ENCODE measurements at regions of chr1 and their contacts with region 1.

Region 1: DNA sequence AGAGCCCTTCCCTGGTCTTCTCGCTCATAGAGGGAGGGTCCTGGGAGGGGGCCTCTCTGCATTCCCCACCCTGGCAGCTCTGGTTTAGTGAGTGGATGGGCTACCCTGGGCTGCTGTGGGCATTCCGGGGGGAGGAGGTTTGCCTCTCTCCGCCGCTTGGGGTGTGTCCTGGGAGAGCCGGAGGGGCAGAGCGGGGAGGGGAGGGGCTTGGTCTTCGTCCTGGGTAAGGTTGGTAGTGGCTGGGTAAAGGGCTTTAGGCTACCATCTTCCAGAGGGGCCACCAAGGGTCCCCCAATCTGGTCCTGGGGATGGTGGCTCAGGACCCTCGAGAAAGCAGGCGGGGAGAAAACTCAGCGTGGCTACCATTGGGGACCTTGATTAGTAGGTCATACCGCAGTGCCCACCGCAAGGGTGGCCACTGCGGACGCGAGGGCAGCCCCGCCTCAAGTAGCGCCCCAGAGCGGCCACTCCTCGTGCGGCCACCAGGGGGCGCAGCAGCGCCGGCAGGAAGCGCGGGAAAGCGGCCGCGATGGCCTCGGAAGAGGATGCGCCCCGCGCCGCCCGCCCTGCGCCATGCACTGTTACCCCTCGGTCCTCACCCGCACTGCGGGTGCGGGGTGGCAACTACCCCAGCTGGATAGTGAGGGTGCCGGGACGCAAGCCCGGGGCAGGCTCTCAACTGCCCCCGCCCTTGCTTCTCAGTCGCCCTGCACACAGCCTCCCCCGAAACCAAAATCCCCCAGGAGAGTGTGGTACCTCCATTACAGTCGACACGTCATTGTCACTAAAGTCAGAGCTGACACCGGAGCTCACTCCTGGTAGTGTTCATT is 44.1 kb upstream of the SLC25A33 start:
- DNase-seq: peak; percentile 69
- H3K4me3 Mint-ChIP-seq: peak overlapping the region; percentile 56
- H3K27ac Mint-ChIP-seq: no peak overlapping the region
- H3K4me1 Mint-ChIP-seq: peaks cover 17% of the 10 kb centered on the region
- H3K27me3 Mint-ChIP-seq: peaks cover 17% of the 10 kb centered on the region

Region 2: DNA sequence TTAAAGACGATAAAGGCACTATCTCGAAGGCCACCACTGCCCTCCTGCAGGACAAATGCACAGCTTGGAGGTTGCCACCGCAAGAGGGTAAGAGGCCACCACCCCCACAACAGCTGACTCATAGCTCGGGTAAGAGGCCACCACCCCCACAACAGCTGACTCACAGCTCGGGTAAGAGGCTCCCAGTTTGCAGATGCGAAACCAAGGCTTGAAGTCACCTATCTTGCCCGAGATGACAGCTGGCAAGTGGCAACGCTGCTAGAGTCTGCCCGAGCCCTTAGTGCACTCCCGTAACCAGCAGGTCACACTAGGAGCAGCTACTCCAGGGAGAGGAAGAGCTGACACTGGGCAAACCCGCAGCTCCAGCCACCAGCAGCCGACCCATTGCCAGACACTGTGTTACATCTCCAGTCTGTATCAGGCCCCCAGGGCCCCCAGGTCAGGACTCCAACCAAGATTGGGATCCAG is 219.5 kb before region 1 on chr1:
- CTCF ChIA-PET with region 1: interaction called, 10 read pairs
- POLR2A ChIA-PET with region 1: no interaction called
- DNase-seq: peak; percentile 90
- H3K4me3 Mint-ChIP-seq: peak overlapping the region; percentile 43
- H3K27ac Mint-ChIP-seq: peak overlapping the region; percentile 82
- H3K4me1 Mint-ChIP-seq: peaks cover 40% of the 10 kb centered on the region
- H3K27me3 Mint-ChIP-seq: peaks cover 9% of the 10 kb centered on the region

Region 3: DNA sequence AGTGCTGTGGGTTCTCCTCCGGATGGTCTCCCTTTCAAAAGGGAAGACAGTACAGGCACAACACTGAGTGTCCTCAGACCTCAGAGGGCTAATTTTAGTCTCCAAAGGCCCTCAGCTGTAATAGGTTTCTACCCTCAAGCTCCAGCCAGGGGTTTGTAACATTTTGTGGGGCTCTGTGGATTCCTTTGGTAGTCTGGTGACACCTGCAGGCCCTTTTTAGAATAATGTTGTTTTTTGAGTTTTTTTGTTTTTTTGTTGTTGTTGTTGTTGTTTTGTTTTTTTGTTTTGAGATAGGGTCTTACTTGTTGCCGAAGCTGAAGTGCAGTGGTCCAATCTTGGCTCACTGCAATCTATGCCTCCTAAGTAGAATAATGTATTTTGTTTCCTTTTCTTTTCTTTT is 78.6 kb after region 1 on chr1:
- CTCF ChIA-PET with region 1: interaction called, 81 read pairs
- POLR2A ChIA-PET with region 1: no interaction called
- DNase-seq: no peak
- H3K4me3 Mint-ChIP-seq: no peak overlapping the region
- H3K27ac Mint-ChIP-seq: no peak overlapping the region
- H3K4me1 Mint-ChIP-seq: no peaks in the 10 kb centered on the region
- H3K27me3 Mint-ChIP-seq: no peaks in the 10 kb centered on the region

Measured in activated CD4-positive, alpha-beta memory T cell treated with anti-CD3 and anti-CD28 coated beads, Interleukin-2, amount 10 ng/mL, durations not matched to agents 7 days and 5 days (primary cell).